ENCODE measurements at regions of chr7 and their contacts with region 1.

Region 1: GRCh38 chr7:604001-604883 is 84.6 kb upstream of the PDGFA start:
- DNase-seq: peak; percentile 92
- ATAC-seq: peak; percentile 73
- H3K4me3 ChIP-seq: peak overlapping the region in 4 of 5 experiments; percentile 40 to 54 (median 48)
- H3K4me3 Mint-ChIP-seq: peak overlapping the region; percentile 91
- H3K27ac ChIP-seq: peak overlapping the region; percentile 93 to 95
- H3K27ac Mint-ChIP-seq: peak overlapping the region; percentile 98
- H3K4me1 ChIP-seq: peaks cover 33 to 52% of the 10 kb centered on the region in 2 donors
- H3K4me1 Mint-ChIP-seq: peaks cover 46% of the 10 kb centered on the region
- H3K27me3 ChIP-seq: no peaks in the 10 kb centered on the region
- H3K27me3 Mint-ChIP-seq: no peaks in the 10 kb centered on the region
- CTCF ChIP-seq: no peak

Region 2: DNA sequence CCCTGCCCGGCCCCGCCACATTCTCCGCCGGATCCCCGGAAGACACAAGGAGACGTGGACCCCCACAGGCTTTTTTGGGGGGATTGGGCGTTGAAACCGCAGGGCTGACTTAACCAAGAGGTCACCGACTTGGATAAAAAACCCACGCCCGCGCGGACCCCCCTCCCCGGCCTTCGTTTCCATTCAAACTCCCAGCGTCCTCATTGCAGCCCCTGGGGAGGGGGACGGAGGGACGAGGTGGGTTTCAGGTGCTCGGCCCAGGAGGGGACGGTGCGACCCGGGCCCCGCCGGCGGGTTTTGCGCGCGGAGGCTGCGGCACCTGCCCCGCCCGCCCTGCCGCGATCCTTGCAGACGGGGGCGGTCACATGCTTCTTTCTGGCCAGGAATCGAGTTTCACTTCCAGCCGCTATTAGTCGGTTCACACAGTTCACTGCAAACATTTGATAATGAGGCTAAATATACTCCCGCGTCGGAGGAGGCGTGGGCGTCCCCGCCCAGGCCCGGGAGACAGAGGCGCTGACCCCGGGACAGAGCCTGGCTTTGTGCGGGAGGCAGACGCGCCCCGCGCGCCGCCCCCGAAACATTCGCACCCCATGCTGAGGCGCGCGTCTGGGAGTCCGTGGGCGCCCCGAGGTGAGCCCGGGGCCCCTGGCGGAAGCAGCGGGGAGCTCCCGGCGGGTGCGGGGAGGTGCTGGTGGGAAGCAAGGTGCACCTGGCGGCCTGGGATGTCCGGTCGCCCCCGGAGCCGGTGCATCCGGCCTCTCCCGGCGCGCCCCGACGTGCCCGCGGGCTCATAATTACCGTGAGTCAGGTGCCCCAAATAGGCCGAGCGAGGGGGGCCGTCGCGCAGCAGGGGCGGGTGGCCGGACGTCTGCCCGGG is 81.9 kb before region 1 on chr7:
- CTCF ChIA-PET with region 1: no interaction called
- POLR2A ChIA-PET with region 1: no interaction called
- intact Hi-C with region 1: loop called (anchors 2 kb)
- DNase-seq: peak; percentile 78
- ATAC-seq: peak; percentile 29
- H3K4me3 ChIP-seq: peak overlapping the region in 4 of 5 experiments; percentile 26 to 54 (median 43)
- H3K4me3 Mint-ChIP-seq: peak overlapping the region; percentile 82
- H3K27ac ChIP-seq: no peak overlapping the region
- H3K27ac Mint-ChIP-seq: peak overlapping the region; percentile 46
- H3K4me1 ChIP-seq: peaks cover 33 to 40% of the 10 kb centered on the region in 2 donors
- H3K4me1 Mint-ChIP-seq: peaks cover 20% of the 10 kb centered on the region
- H3K27me3 ChIP-seq: peaks cover 0 to 40% (median 15%) of the 10 kb centered on the region in 4 experiments
- H3K27me3 Mint-ChIP-seq: peaks cover 14% of the 10 kb centered on the region
- CTCF ChIP-seq: peak; percentile 17

Region 3: GRCh38 chr7:767941-768731 is 163.9 kb after region 1 on chr7:
- CTCF ChIA-PET with region 1: no interaction called
- POLR2A ChIA-PET with region 1: no interaction called
- intact Hi-C with region 1: no loop called
- DNase-seq: no peak
- ATAC-seq: no peak
- H3K4me3 ChIP-seq: no peak overlapping the region
- H3K4me3 Mint-ChIP-seq: no peak overlapping the region
- H3K27ac ChIP-seq: no peak overlapping the region
- H3K27ac Mint-ChIP-seq: no peak overlapping the region
- H3K4me1 ChIP-seq: no peaks in the 10 kb centered on the region
- H3K4me1 Mint-ChIP-seq: no peaks in the 10 kb centered on the region
- H3K27me3 ChIP-seq: no peaks in the 10 kb centered on the region
- H3K27me3 Mint-ChIP-seq: no peaks in the 10 kb centered on the region
- CTCF ChIP-seq: no peak

Measured in B cell (primary cell).